Activated naive CD4-positive, alpha-beta T cell treated with anti-CD3 and anti-CD28 coated beads for 36 hours (primary cell): ENCODE measurements at regions of chr4 and their contacts with region 1.

Region 1: GRCh38 chr4:26330186-26330787 is 9.5 kb downstream of the RBPJ start:
- DNase-seq: no peak
- H3K4me3 Mint-ChIP-seq: no peak overlapping the region
- H3K27ac Mint-ChIP-seq: no peak overlapping the region
- H3K4me1 Mint-ChIP-seq: peaks cover 40% of the 10 kb centered on the region
- H3K27me3 Mint-ChIP-seq: no peaks in the 10 kb centered on the region

Region 2: GRCh38 chr4:26162101-26162500 is 168.2 kb before region 1 on chr4:
- CTCF ChIA-PET with region 1: no interaction called
- intact Hi-C with region 1: no loop called
- DNase-seq: no peak
- H3K4me3 Mint-ChIP-seq: no peak overlapping the region
- H3K27ac Mint-ChIP-seq: no peak overlapping the region
- H3K4me1 Mint-ChIP-seq: no peaks in the 10 kb centered on the region
- H3K27me3 Mint-ChIP-seq: no peaks in the 10 kb centered on the region

Region 3: GRCh38 chr4:26302031-26302899 is 28.0 kb before region 1 on chr4:
- CTCF ChIA-PET with region 1: no interaction called
- intact Hi-C with region 1: no loop called
- DNase-seq: no peak
- H3K4me3 Mint-ChIP-seq: no peak overlapping the region
- H3K27ac Mint-ChIP-seq: no peak overlapping the region
- H3K4me1 Mint-ChIP-seq: peaks cover 15% of the 10 kb centered on the region
- H3K27me3 Mint-ChIP-seq: no peaks in the 10 kb centered on the region

Region 4: GRCh38 chr4:26342328-26343037 is 12.2 kb after region 1 on chr4:
- CTCF ChIA-PET with region 1: interaction called, 33 read pairs
- intact Hi-C with region 1: no loop called
- DNase-seq: no peak
- H3K4me3 Mint-ChIP-seq: no peak overlapping the region
- H3K27ac Mint-ChIP-seq: no peak overlapping the region
- H3K4me1 Mint-ChIP-seq: peaks cover 67% of the 10 kb centered on the region
- H3K27me3 Mint-ChIP-seq: no peaks in the 10 kb centered on the region

Region 5: GRCh38 chr4:26372525-26373172 is 42.4 kb after region 1 on chr4:
- CTCF ChIA-PET with region 1: interaction called, 8 read pairs
- intact Hi-C with region 1: loop called (anchors 5 kb)
- DNase-seq: peak; percentile 50
- H3K4me3 Mint-ChIP-seq: no peak overlapping the region
- H3K27ac Mint-ChIP-seq: no peak overlapping the region
- H3K4me1 Mint-ChIP-seq: peaks cover 59% of the 10 kb centered on the region
- H3K27me3 Mint-ChIP-seq: no peaks in the 10 kb centered on the region

Region 6: DNA sequence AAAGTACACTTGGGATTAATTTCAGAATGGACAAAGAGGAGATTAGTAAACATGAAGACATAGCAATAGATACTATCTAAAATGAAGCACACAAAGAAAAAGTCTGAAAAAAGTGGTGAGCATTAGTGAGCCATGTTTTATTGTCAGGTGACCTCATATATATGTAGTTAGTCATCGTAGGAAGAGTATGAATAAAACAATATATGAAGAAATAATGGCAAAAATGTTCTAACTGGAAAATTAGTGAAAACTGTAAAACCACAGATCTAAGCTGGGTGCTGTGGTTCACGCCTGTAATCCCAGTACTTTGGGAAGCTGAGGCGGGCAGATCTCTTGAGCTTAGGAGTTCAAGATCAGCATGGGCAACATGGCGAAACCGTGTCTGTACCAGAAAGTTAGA is 58.4 kb after region 1 on chr4:
- CTCF ChIA-PET with region 1: interaction called, 13 read pairs
- intact Hi-C with region 1: no loop called
- DNase-seq: no peak
- H3K4me3 Mint-ChIP-seq: no peak overlapping the region
- H3K27ac Mint-ChIP-seq: no peak overlapping the region
- H3K4me1 Mint-ChIP-seq: peaks cover 9% of the 10 kb centered on the region
- H3K27me3 Mint-ChIP-seq: no peaks in the 10 kb centered on the region

Region 7: DNA sequence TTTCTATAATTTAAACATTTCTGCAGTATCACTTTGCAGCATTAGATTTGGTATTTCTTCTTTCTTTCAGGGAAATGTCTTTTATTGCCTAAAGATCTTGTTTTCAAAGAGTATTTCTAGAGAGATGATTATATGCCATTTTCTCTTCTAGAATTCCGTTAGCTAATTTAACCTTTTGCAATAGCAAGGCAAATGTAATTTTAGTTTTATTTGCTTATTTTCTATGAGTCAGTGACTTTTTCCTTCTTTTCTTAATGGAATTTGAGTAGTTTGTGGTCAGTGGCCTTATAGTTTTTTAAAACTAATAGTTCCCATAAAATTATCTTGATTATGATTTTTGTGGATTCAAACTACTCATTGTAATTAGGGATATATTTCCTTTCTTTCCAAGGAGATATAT is 87.8 kb after region 1 on chr4:
- CTCF ChIA-PET with region 1: interaction called, 11 read pairs
- intact Hi-C with region 1: no loop called
- DNase-seq: no peak
- H3K4me3 Mint-ChIP-seq: no peak overlapping the region
- H3K27ac Mint-ChIP-seq: no peak overlapping the region
- H3K4me1 Mint-ChIP-seq: no peaks in the 10 kb centered on the region
- H3K27me3 Mint-ChIP-seq: no peaks in the 10 kb centered on the region

Region 8: DNA sequence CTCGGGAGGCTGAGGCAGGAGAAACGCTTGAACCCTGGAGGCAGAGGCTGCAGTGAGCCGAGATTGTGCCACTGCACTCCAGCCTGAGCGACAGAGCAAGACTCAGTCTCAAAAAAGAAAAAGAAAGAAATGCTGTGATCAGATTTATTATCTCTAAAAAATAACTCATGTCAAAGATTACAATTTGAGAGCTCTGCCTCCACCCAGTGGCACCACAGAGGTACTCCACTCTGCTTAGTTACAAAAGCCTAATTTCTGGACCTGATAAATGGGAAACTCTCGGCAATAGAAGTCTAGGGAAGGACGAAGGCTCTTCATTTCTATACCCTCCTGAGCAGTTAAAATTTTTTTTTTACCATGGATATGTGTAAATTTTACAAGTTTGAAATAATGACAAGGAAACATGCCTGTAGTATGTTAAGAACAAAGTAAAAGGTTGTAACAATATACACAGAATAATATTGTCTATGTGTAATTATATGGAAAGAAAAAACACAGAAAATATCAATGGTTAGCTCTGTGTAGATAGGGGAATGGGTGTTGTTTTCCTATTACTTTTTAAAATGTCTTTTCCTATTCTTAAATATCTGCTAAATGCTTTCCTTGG is 680.1 kb after region 1 on chr4:
- CTCF ChIA-PET with region 1: interaction called, 7 read pairs
- intact Hi-C with region 1: loop called (anchors 1 kb)
- DNase-seq: peak; percentile 77
- H3K4me3 Mint-ChIP-seq: no peak overlapping the region
- H3K27ac Mint-ChIP-seq: peak overlapping the region; percentile 53
- H3K4me1 Mint-ChIP-seq: peaks cover 25% of the 10 kb centered on the region
- H3K27me3 Mint-ChIP-seq: no peaks in the 10 kb centered on the region